ENCODE measurements at regions of chr22 and their contacts with region 1.

Region 1: GRCh38 chr22:23737696-23738095 is 13.2 kb downstream of the ZNF70 start:
- DNase-seq: no peak
- H3K4me3 ChIP-seq: no peak overlapping the region
- H3K27ac ChIP-seq: no peak overlapping the region
- H3K4me1 ChIP-seq: no peaks in the 10 kb centered on the region
- H3K27me3 ChIP-seq: no peaks in the 10 kb centered on the region
- CTCF ChIP-seq: no peak

Region 2: DNA sequence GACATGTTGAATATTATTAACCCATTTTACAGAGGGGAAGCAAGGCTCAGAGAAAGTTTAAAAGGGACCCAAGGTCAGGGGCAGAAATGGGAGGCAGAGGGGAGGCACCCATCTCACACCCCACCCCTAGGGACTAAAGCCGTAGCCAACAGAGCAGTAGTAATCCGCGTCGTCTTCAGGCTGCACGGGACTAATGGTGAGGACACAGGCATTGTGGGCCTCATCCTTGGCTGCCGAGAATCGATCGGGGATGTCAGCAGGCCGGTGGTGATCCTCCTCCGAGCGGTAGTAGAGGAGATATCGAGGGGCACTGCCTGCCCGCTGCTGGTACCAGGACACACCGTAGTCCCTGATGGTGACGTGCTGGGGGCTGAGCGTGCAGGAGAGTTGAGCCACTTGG is 15.1 kb after region 1 on chr22:
- CTCF ChIA-PET with region 1: no interaction called
- POLR2A ChIA-PET with region 1: interaction called, 10 read pairs
- intact Hi-C with region 1: no loop called
- DNase-seq: no peak
- H3K4me3 ChIP-seq: no peak overlapping the region
- H3K27ac ChIP-seq: no peak overlapping the region
- H3K4me1 ChIP-seq: peaks cover 4% of the 10 kb centered on the region
- H3K27me3 ChIP-seq: no peaks in the 10 kb centered on the region
- CTCF ChIP-seq: no peak

Region 3: GRCh38 chr22:23857606-23858483 is 120.1 kb after region 1 on chr22 and contains the start of gene SLC2A11:
- CTCF ChIA-PET with region 1: no interaction called
- POLR2A ChIA-PET with region 1: interaction called, 15 read pairs
- intact Hi-C with region 1: no loop called
- DNase-seq: peak; percentile 98
- H3K4me3 ChIP-seq: peak within 1 kb of the TSS; percentile 57
- H3K27ac ChIP-seq: peak within 1 kb of the TSS; percentile 35
- H3K4me1 ChIP-seq: peaks cover 7% of the 10 kb centered on the region
- H3K27me3 ChIP-seq: no peaks in the 10 kb centered on the region
- CTCF ChIP-seq: peak; percentile 18; the same call in 1 of the 2 replicates
- total RNA-seq, gene SLC2A11: 4.9 and 6.2 TPM in 2 replicates

Measured in A673 (cell line).